Left lung (tissue), 14 donors: ENCODE measurements at regions of chr20 and their contacts with region 1.

Region 1: DNA sequence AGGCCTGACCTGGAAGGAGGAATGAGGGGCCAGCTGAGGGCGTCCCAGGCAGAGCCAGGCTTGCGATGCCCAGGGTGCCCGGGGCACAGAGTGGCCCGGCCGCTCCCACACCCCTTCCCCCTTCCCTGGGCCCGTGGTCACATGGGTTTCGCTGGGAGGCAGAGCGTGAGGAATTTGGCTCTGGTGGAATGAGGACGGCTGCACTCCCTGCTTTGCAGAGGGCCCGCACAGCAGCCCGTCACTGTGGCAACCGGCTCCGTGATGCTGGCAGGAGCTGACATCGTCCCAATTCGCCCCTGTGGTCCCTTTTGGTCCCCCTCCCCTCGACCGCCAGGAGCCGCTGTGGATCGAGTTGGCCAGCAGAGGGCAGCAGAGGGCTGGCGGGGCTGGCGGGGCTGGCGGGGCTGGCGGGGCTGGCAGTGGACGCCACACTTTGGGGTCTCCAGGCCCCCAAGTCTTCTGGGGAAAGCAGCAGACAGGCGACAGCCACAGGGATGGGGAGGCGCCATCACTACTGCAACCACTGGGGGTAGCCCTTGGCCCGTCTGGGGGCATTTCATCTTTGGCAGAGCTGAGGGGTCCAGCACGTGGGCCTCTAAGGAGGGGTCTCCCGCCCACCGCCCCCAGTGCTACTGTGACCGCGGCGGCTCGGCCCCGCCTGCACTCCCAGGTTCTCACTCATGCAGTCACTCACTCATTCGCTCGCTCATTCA is 49.6 kb upstream of the BHLHE23 start:
- DNase-seq: peak; percentile 8 to 79 (median 26)
- ATAC-seq: peak; percentile 83
- H3K4me3 ChIP-seq: no peak overlapping the region
- H3K27ac ChIP-seq: no peak overlapping the region
- H3K4me1 ChIP-seq: peaks cover 0 to 8% of the 10 kb centered on the region in 2 donors
- H3K27me3 ChIP-seq: peaks cover 0 to 84% of the 10 kb centered on the region in 2 donors
- CTCF ChIP-seq: peak; percentile 79 to 80

Region 2: GRCh38 chr20:63116412-63117099 is 60.2 kb after region 1 on chr20:
- intact Hi-C with region 1: loop called in 1 of 2 experiments (anchors 10 kb)
- DNase-seq: peak in 2 of 4 donors; percentile 39 to 81
- ATAC-seq: peak; percentile 56
- H3K4me3 ChIP-seq: no peak overlapping the region
- H3K27ac ChIP-seq: no peak overlapping the region
- H3K4me1 ChIP-seq: no peaks in the 10 kb centered on the region
- H3K27me3 ChIP-seq: peaks cover 0 to 85% of the 10 kb centered on the region in 2 donors
- CTCF ChIP-seq: no peak

Region 3: DNA sequence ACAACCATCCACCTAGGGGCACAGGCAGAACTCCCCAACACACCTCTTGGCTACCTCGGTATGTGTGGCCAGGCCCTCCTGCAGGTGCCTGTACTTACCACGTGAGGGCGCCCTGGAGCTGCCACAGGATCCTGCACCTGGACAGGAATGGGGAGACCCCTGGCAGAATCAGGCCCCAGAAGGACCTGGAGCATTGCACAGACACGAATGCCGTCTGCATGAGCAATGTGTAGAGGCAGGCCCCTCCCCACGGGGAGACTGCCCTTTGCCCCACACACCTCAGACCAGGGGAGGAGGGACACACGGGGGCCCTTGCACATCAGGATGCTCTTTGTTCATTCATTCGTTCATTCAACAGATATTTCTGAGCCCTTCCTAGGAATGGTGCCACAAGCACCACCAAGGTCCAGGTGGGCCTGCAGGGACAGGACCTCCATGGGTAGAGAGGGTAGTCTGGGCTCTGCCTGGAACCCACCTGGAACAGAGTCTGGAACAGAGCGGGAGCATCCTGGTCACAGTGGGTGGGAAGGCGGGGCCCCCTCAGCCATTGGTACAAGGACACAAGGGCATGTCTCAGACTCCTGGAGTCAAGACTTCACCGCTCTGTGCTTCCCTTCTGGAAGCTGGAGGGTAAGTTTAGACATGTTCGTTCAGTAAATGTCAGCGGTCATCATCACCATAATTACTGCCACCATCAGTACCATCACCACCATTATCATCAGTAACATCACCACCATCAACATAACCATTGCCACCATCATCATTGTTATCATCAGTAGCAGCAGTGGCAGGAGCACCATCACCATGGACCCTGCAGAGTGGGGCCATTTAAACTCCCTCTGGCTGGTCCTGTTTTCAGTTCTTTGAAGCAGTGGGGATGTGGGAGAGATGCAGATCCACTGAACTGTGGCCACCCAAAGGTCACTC is 127.3 kb after region 1 on chr20:
- intact Hi-C with region 1: loop called in 1 of 2 experiments (anchors 10 kb)
- DNase-seq: peak in 1 of 4 donors; percentile 10
- ATAC-seq: peak; percentile 78
- H3K4me3 ChIP-seq: no peak overlapping the region
- H3K27ac ChIP-seq: no peak overlapping the region
- H3K4me1 ChIP-seq: peaks cover 3 to 7% of the 10 kb centered on the region in 2 donors
- H3K27me3 ChIP-seq: peaks cover 21 to 60% of the 10 kb centered on the region in 2 donors
- CTCF ChIP-seq: peak; percentile 57 to 66

Region 4: GRCh38 chr20:63782051-63782471 is 725.7 kb after region 1 on chr20:
- intact Hi-C with region 1: no loop called
- DNase-seq: peak in 1 of 4 donors; percentile 45
- ATAC-seq: no peak
- H3K4me3 ChIP-seq: no peak overlapping the region
- H3K27ac ChIP-seq: no peak overlapping the region
- H3K4me1 ChIP-seq: no peaks in the 10 kb centered on the region
- H3K27me3 ChIP-seq: no peaks in the 10 kb centered on the region
- CTCF ChIP-seq: no peak